Psoas muscle (tissue), 8 donors: ENCODE measurements at regions of chr13 and their contacts with region 1.

Region 1: DNA sequence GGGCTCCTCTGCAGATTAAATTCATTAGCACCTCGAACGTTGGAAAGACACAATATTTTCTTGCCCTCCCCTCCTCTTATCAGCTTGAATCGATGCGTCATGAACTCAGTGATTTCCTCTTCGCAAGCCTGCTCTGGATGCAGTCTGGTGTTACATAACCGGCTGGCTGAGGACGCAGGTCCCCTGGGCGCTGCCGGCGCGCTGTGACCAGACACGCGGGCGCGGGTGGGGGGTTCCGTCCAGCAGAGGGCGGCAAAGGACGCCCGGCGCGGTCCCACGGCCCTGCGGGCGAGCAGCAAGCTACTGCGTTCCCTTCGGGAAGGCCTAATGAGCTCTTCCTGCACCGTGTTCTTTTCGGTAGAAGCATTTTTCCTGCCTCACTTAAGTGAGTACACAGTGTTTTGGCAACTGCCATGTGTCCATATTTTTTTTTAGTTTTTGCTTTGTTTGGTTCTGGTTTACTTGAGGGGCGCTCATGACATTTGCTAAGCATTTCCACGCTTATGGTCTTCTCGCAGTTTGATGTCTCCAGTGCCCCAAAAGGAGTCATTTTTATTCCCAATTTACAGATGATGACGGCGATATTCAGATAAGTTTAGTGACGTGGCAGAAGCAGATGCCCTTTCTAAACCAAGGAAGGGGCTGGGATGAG is 112.2 kb upstream of the MBNL2 start:
- DNase-seq: peak; percentile 91 to 95
- ATAC-seq: peak; percentile 97 to 99 (median 98)
- H3K4me3 ChIP-seq: peak overlapping the region; percentile 19
- H3K27ac ChIP-seq: no peak overlapping the region
- H3K4me1 ChIP-seq: peaks cover 20% of the 10 kb centered on the region
- H3K27me3 ChIP-seq: no peaks in the 10 kb centered on the region
- CTCF ChIP-seq: peak; percentile 98

Region 2: DNA sequence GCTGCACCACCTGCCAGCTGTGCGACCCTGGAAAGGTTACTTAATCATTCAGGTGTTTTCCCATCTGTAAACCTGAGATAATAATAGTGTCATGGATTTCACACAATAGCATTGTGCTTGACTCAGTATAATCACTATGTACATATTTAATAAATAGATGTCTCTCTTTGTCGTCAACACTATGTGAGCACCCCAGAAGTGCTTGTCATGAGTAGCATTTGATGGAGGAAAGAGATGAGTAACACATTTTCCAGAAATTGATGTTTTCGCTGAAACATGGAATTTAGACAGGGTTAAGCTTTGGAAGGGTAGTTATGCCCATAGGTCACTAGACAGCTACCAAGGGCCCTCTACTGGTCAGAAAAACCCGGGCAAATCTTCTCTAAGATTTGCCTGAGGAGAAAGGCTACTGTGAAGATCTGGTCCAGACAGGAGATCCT is 102.7 kb after region 1 on chr13:
- intact Hi-C with region 1: loop called (anchors 2 kb)
- DNase-seq: no peak
- ATAC-seq: peak in 3 of 4 donors; percentile 46 to 84 (median 80)
- H3K4me3 ChIP-seq: no peak overlapping the region
- H3K27ac ChIP-seq: no peak overlapping the region
- H3K4me1 ChIP-seq: no peaks in the 10 kb centered on the region
- H3K27me3 ChIP-seq: no peaks in the 10 kb centered on the region
- CTCF ChIP-seq: peak; percentile 56

Region 3: DNA sequence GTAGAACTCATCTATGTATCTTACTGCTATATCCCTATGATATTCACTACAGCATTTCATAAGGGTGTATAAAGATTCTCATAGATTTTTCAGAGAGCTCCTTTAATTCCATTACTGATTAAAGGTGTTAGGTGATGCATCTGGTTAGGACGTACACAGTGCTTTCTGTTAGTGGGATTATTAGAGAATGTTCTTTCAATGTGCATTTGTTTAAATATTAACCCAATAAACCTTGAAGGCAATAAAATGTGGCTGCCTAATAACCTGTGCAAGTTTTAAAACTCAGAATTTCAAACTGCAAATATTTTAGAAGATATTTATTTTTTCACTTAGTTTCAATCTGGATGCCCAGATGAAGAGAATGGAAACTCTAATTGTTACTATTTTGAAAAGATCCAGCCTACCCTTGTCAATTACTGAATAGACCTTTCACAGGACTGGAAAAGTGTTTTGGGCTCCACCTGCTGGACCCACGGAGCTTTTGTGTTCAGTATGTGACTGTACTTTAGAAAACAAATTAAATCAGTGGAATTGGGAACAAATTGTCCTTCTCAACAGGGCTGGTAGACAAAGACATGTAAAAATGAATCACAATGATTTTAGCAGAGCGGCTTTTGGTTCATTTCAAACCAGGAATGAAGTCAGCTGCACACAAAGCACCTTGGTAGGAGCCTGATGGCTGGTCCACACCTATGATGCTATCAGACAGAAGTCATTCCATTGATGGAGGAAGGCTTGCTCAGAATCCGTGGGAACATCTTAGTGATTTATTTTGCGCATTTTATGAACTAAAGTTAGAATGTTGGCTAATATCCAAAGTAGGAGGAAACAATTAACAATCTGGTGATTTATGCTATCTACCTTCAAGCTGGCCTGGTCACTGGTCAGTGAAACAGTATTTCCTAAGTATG is 234.6 kb after region 1 on chr13:
- intact Hi-C with region 1: loop called (anchors 1 to 2 kb)
- DNase-seq: peak; percentile 63 to 77
- ATAC-seq: peak; percentile 55 to 87 (median 80)
- H3K4me3 ChIP-seq: no peak overlapping the region
- H3K27ac ChIP-seq: peak overlapping the region; percentile 0
- H3K4me1 ChIP-seq: peaks cover 22% of the 10 kb centered on the region
- H3K27me3 ChIP-seq: no peaks in the 10 kb centered on the region
- CTCF ChIP-seq: peak; percentile 79

Region 4: GRCh38 chr13:97359181-97360057 is 249.5 kb after region 1 on chr13:
- intact Hi-C with region 1: loop called (anchors 2 to 5 kb)
- DNase-seq: no peak
- ATAC-seq: peak; percentile 80 to 95 (median 88)
- H3K4me3 ChIP-seq: no peak overlapping the region
- H3K27ac ChIP-seq: no peak overlapping the region
- H3K4me1 ChIP-seq: peaks cover 11% of the 10 kb centered on the region
- H3K27me3 ChIP-seq: no peaks in the 10 kb centered on the region
- CTCF ChIP-seq: peak; percentile 87

Region 5: GRCh38 chr13:97432917-97433726 is 323.2 kb after region 1 on chr13:
- intact Hi-C with region 1: loop called in 1 of 2 experiments (anchors 10 kb)
- DNase-seq: peak; percentile 98 to 99
- ATAC-seq: peak; percentile 90 to 94 (median 92)
- H3K4me3 ChIP-seq: peak overlapping the region; percentile 82
- H3K27ac ChIP-seq: peak overlapping the region; percentile 97
- H3K4me1 ChIP-seq: peaks cover 46% of the 10 kb centered on the region
- H3K27me3 ChIP-seq: no peaks in the 10 kb centered on the region
- CTCF ChIP-seq: no peak